B cell (primary cell): ENCODE measurements at regions of chr4 and their contacts with region 1.

Region 1: DNA sequence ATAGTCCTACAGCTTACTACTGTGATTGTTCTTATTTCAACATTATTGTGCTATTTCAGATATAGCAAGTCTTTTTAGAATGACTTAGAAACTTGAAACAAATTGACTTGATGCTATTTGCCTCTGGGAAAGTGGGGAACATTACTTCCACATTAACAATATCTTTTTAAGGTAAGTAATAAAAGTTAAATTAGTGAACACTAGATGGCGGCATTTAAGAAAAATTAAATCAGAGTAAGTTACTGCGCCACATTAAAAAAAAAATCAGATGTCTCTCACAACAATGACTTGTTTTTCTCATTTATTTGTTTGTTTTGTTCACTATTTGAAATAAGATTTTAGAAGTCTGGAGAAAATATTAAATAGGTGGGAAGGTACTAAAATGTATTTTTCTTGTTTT is 1026.9 kb upstream of the SLIT2 start:
- DNase-seq: peak; percentile 5
- ATAC-seq: no peak
- H3K4me3 ChIP-seq: no peak overlapping the region
- H3K4me3 Mint-ChIP-seq: no peak overlapping the region
- H3K27ac ChIP-seq: no peak overlapping the region
- H3K27ac Mint-ChIP-seq: no peak overlapping the region
- H3K4me1 ChIP-seq: no peaks in the 10 kb centered on the region
- H3K4me1 Mint-ChIP-seq: no peaks in the 10 kb centered on the region
- H3K27me3 ChIP-seq: no peaks in the 10 kb centered on the region
- H3K27me3 Mint-ChIP-seq: no peaks in the 10 kb centered on the region
- CTCF ChIP-seq: peak; percentile 52

Region 2: GRCh38 chr4:18695733-18696527 is 528.9 kb before region 1 on chr4:
- CTCF ChIA-PET with region 1: no interaction called
- POLR2A ChIA-PET with region 1: no interaction called
- intact Hi-C with region 1: no loop called
- DNase-seq: no peak
- ATAC-seq: no peak
- H3K4me3 ChIP-seq: no peak overlapping the region
- H3K4me3 Mint-ChIP-seq: no peak overlapping the region
- H3K27ac ChIP-seq: no peak overlapping the region
- H3K27ac Mint-ChIP-seq: no peak overlapping the region
- H3K4me1 ChIP-seq: no peaks in the 10 kb centered on the region
- H3K4me1 Mint-ChIP-seq: no peaks in the 10 kb centered on the region
- H3K27me3 ChIP-seq: peaks cover 0 to 3% (median 0%) of the 10 kb centered on the region in 4 experiments
- H3K27me3 Mint-ChIP-seq: no peaks in the 10 kb centered on the region
- CTCF ChIP-seq: no peak

Region 3: DNA sequence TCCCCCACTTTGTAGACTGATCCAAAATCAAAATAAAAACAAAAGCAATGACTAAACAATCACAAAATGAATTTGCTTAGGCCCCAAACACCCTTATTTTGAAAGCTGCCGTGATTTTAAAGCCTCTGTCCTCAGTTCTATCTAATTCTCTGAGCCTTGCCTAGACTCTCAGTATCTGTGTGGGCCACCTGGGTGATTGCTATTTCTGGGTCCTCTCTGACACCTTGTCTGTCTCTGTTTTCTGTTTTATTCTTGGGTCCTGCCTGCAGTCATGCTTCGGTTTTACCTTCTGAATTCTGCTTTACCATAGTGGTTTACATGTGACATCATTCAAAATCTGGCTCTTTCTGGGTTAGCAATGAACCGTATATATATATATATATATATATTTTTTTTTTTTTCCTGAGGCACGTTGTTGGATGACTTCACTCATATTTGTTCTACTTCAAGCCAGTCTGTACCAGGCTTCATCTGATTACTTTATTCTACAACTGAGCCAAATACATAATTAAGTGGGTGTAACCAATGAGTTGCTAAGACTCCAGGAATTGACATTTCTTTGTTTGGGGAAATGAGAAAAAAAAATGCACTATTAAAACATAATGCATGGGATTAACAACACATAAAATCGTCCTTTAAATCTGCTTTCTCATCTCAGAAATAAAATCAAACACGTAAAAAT is 316.2 kb after region 1 on chr4:
- CTCF ChIA-PET with region 1: no interaction called
- POLR2A ChIA-PET with region 1: no interaction called
- intact Hi-C with region 1: no loop called
- DNase-seq: no peak
- ATAC-seq: no peak
- H3K4me3 ChIP-seq: no peak overlapping the region
- H3K4me3 Mint-ChIP-seq: no peak overlapping the region
- H3K27ac ChIP-seq: no peak overlapping the region
- H3K27ac Mint-ChIP-seq: no peak overlapping the region
- H3K4me1 ChIP-seq: no peaks in the 10 kb centered on the region
- H3K4me1 Mint-ChIP-seq: no peaks in the 10 kb centered on the region
- H3K27me3 ChIP-seq: no peaks in the 10 kb centered on the region
- H3K27me3 Mint-ChIP-seq: no peaks in the 10 kb centered on the region
- CTCF ChIP-seq: no peak

Region 4: DNA sequence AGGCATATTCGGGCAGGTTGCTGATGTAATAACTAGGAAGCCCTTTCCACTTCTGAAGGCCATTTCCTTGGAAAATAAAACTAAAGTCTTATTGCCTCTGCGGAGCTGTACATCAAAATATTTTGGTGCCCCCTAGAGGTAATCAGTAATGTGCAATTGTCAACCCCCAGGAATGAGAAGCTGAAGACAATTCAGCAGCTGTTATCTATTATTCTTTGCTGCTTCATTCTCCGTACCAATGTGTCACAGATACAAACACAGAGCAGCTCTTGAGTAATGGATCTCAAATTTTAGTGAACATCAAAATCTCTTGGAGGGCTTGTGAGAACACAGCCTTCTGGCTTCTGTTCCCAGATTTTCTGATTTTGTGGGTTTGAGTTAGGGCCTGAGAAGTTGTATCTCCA is 1023.3 kb after region 1 on chr4:
- CTCF ChIA-PET with region 1: interaction called, 3 read pairs
- POLR2A ChIA-PET with region 1: no interaction called
- intact Hi-C with region 1: loop called (anchors 5 kb)
- DNase-seq: no peak
- ATAC-seq: no peak
- H3K4me3 ChIP-seq: no peak overlapping the region
- H3K4me3 Mint-ChIP-seq: no peak overlapping the region
- H3K27ac ChIP-seq: no peak overlapping the region
- H3K27ac Mint-ChIP-seq: no peak overlapping the region
- H3K4me1 ChIP-seq: peaks cover 9 to 10% of the 10 kb centered on the region in 2 donors
- H3K4me1 Mint-ChIP-seq: peaks cover 10% of the 10 kb centered on the region
- H3K27me3 ChIP-seq: peaks cover 0 to 15% (median 11%) of the 10 kb centered on the region in 4 experiments
- H3K27me3 Mint-ChIP-seq: peaks cover 22% of the 10 kb centered on the region
- CTCF ChIP-seq: peak; percentile 23